ENCODE measurements at regions of chr2 and their contacts with region 1.

Region 1: GRCh38 chr2:226791487-226792081 is 8.0 kb downstream of the IRS1 start:
- DNase-seq: peak; percentile 93
- H3K4me3 Mint-ChIP-seq: peak overlapping the region; percentile 89
- H3K27ac Mint-ChIP-seq: peak overlapping the region; percentile 92
- H3K4me1 Mint-ChIP-seq: peaks cover 63% of the 10 kb centered on the region
- H3K27me3 Mint-ChIP-seq: no peaks in the 10 kb centered on the region

Region 2: GRCh38 chr2:226772389-226773179 is 19.0 kb before region 1 on chr2:
- CTCF ChIA-PET with region 1: interaction called, 6 read pairs
- POLR2A ChIA-PET with region 1: interaction called, 15 read pairs
- DNase-seq: no peak
- H3K4me3 Mint-ChIP-seq: peak overlapping the region; percentile 45
- H3K27ac Mint-ChIP-seq: peak overlapping the region; percentile 69
- H3K4me1 Mint-ChIP-seq: peaks cover 30% of the 10 kb centered on the region
- H3K27me3 Mint-ChIP-seq: no peaks in the 10 kb centered on the region

Region 3: GRCh38 chr2:226813148-226813701 is 21.6 kb after region 1 on chr2:
- CTCF ChIA-PET with region 1: no interaction called
- POLR2A ChIA-PET with region 1: no interaction called
- DNase-seq: no peak
- H3K4me3 Mint-ChIP-seq: no peak overlapping the region
- H3K27ac Mint-ChIP-seq: no peak overlapping the region
- H3K4me1 Mint-ChIP-seq: no peaks in the 10 kb centered on the region
- H3K27me3 Mint-ChIP-seq: peaks cover 26% of the 10 kb centered on the region

Region 4: GRCh38 chr2:226835796-226836547 is 44.4 kb after region 1 on chr2 and contains the start of gene RHBDD1:
- CTCF ChIA-PET with region 1: interaction called, 6 read pairs
- POLR2A ChIA-PET with region 1: interaction called, 44 read pairs
- DNase-seq: peak; percentile 96
- H3K4me3 Mint-ChIP-seq: peak within 1 kb of the TSS; percentile 97
- H3K27ac Mint-ChIP-seq: peak within 1 kb of the TSS; percentile 100
- H3K4me1 Mint-ChIP-seq: peaks cover 60% of the 10 kb centered on the region
- H3K27me3 Mint-ChIP-seq: no peaks in the 10 kb centered on the region
- total RNA-seq, gene RHBDD1: 38.1 to 43.0 TPM